Activated T-helper 1 cell treated with anti-CD3 and anti-CD28 coated beads, Interleukin-12 subunit alpha, Interleukin-12 subunit beta, Interleukin-2, Interleukin-4 antibody, amounts not matched to agents 30 ng/mL and 10 ng/mL and 1 ng/mL, durations not matched to agents 14 hours and 24 hours and 36 hours (primary cell): ENCODE measurements at regions of chr5 and their contacts with region 1.

Region 1: GRCh38 chr5:140564196-140565023 is at the starts of genes APBB3 and SLC35A4:
- DNase-seq: peak; percentile 98
- H3K4me3 Mint-ChIP-seq: peak within 1 kb of the TSS; percentile 95
- H3K27ac Mint-ChIP-seq: peak within 1 kb of the TSS; percentile 96
- H3K4me1 Mint-ChIP-seq: peaks cover 54% of the 10 kb centered on the region
- H3K27me3 Mint-ChIP-seq: no peaks in the 10 kb centered on the region
- total RNA-seq, gene APBB3: 17.2 and 21.2 TPM in 2 replicates
- total RNA-seq, gene SLC35A4: 94.3 and 107 TPM in 2 replicates

Region 2: DNA sequence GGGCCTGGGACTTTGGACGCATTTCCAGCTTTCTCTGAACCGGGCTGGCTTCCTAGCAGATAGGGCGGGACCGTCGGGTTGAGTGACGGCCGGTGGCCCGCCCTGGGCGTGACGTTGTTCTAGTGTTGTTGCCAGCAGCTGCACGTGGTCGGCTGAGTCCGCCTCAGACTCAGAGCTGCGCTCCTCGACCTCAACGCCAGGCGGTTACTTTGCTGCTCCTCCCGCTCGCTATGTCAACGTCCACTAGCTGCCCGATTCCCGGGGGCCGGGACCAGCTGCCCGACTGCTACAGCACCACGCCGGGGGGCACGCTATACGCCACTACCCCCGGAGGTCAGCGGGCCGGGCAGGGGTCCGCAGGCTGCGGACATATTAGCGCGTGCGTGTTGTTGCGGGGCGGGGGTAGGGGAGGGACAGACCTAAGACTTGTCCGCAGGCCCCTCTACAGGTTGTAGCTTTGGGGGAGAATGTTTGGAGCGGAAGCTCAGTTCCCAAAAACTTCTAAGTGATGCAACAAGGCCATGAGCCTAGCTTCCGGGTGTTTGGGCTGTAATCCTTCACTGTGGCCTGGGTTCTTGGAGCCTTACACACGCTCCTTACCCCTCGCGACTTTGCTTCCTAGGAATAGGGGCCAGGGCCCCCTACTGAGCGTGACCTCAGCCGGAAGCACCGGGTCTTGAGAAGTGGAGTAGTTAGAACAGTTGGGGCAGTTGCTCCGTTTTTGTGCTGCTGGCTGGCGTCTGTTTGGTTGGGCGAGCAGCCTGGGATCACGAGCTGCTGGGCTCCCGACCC is 16.7 kb before region 1 on chr5 and contains the start of gene EIF4EBP3:
- intact Hi-C with region 1: loop called (anchors 1 kb)
- DNase-seq: peak; percentile 81
- H3K4me3 Mint-ChIP-seq: peak within 1 kb of the TSS; percentile 80
- H3K27ac Mint-ChIP-seq: peak within 1 kb of the TSS; percentile 82
- H3K4me1 Mint-ChIP-seq: peaks cover 48% of the 10 kb centered on the region
- H3K27me3 Mint-ChIP-seq: no peaks in the 10 kb centered on the region
- total RNA-seq, gene EIF4EBP3: 12.7 and 16.1 TPM in 2 replicates

Region 3: DNA sequence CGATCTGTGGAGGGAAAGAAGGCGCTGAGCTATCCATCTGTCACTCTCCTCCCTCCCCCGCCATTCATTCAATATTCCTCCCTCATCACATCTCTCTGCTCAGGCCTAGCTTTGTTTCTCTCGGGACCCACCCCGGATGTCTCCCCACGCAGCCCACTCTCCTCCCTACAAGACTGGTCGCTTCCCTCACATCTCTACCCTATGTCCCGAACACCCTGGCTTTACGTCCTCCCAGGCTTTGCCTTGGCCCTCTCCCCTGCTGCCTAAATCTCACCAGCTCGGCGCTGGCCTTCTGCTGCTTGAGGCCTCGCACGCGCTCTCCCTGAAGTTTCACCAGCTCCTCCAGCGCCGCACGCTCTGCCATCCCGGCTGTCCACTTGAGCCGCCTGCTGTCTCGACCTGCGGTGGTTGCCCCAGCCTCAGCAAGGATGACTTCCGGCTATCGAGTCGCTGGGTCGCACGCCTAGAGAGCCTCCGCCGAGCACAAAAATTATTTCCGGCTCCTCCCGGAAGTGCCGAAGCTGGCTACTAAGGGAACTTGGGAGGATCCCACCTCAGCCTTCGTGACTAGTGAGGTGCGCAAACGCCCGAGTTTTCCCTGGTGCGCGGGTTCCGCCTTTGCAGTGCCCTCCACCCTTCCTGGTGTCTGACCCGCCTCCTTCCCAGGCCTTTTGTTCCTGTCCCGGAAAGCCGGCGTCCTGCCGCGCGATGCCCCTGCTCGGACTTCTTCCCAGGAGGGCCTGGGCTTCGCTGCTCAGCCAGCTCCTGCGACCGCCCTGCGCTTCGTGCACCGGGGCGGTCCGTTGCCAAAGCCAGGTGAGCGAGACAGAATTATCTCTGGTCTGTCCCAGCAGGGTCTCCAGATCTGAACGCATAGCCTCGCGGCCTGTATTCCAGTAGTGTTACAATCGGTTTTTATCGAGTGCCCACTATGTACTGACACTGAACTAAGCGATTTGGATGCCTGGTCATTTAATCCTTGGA is 126.8 kb after region 1 on chr5 and contains the starts of genes HARS1 and HARS2:
- intact Hi-C with region 1: loop called (anchors 1 kb)
- DNase-seq: peak; percentile 81
- H3K4me3 Mint-ChIP-seq: peak within 1 kb of the TSS; percentile 100
- H3K27ac Mint-ChIP-seq: peak within 1 kb of the TSS; percentile 95
- H3K4me1 Mint-ChIP-seq: peaks cover 50% of the 10 kb centered on the region
- H3K27me3 Mint-ChIP-seq: no peaks in the 10 kb centered on the region
- total RNA-seq, gene HARS1: 112 and 114 TPM in 2 replicates
- total RNA-seq, gene HARS2: 31.2 and 32.7 TPM in 2 replicates

Region 4: DNA sequence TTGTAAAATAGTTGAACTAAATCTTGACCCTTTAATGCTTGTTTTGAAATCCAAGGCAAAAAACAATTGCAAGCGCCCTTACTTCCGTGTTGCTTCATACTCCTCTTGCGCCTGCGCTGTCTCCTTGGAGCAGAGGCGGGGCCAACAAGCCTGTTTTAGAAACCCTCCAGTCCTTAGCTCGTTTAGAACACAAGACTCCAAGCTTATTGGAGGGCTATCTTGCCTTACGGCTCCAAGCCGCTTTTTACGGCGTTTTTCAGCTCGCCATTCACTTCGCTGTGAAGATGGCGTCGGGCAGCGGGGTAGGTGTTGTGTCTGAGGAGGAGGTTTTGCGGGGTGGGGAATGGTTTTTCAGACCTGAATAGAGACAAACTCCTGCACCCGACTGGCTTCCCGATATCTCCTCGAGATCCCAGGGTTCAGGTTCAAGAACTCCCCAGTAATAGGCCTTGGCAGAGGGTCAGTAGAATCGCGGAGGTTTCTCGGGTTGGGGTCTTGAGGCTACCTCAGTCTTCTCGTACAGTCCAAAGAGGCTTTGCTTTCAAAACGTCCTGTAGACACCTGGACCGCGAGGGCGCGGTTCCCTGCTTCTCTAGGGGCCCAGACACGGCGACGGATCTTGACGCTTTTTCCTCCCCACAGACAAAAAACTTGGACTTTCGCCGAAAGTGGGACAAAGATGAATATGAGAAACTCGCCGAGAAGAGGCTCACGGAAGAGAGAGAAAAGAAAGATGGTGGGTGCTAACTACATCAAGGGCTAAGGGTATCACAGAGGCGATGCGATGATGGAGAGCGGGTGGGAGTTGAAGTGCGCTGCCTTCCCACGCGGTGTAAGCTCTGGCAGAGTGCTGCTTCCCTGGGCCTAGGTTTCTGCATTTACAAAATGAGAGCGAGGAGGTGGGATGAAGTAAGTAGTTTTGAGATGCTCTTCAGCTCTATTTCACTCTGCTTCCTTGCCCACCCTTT is 136.1 kb after region 1 on chr5 and contains the start of gene ZMAT2:
- intact Hi-C with region 1: loop called (anchors 2 kb)
- DNase-seq: peak; percentile 92
- H3K4me3 Mint-ChIP-seq: peak within 1 kb of the TSS; percentile 96
- H3K27ac Mint-ChIP-seq: peak within 1 kb of the TSS; percentile 88
- H3K4me1 Mint-ChIP-seq: peaks cover 22% of the 10 kb centered on the region
- H3K27me3 Mint-ChIP-seq: no peaks in the 10 kb centered on the region
- total RNA-seq, gene ZMAT2: 68.0 and 71.2 TPM in 2 replicates